Activated CD8-positive, alpha-beta memory T cell treated with anti-CD3 and anti-CD28 coated beads, Interleukin-2, amount 10 ng/mL, durations not matched to agents 7 days and 5 days (primary cell): ENCODE measurements at regions of chr3 and their contacts with region 1.

Region 1: GRCh38 chr3:183188895-183189462 is 26.4 kb upstream of the LAMP3 start:
- DNase-seq: peak; percentile 53
- ATAC-seq: peak; percentile 36
- H3K4me3 Mint-ChIP-seq: no peak overlapping the region
- H3K27ac Mint-ChIP-seq: no peak overlapping the region
- H3K4me1 Mint-ChIP-seq: peaks cover 13% of the 10 kb centered on the region
- H3K27me3 Mint-ChIP-seq: no peaks in the 10 kb centered on the region

Region 2: GRCh38 chr3:183122257-183122932 is 66.6 kb before region 1 on chr3:
- CTCF ChIA-PET with region 1: interaction called, 18 read pairs
- DNase-seq: no peak
- ATAC-seq: peak; percentile 27
- H3K4me3 Mint-ChIP-seq: no peak overlapping the region
- H3K27ac Mint-ChIP-seq: no peak overlapping the region
- H3K4me1 Mint-ChIP-seq: no peaks in the 10 kb centered on the region
- H3K27me3 Mint-ChIP-seq: peaks cover 5% of the 10 kb centered on the region

Region 3: GRCh38 chr3:183468424-183468823 is 279.4 kb after region 1 on chr3:
- CTCF ChIA-PET with region 1: no interaction called
- DNase-seq: no peak
- ATAC-seq: no peak
- H3K4me3 Mint-ChIP-seq: no peak overlapping the region
- H3K27ac Mint-ChIP-seq: peak overlapping the region; percentile 73
- H3K4me1 Mint-ChIP-seq: peaks cover 18% of the 10 kb centered on the region
- H3K27me3 Mint-ChIP-seq: peaks cover 5% of the 10 kb centered on the region

Region 4: GRCh38 chr3:183555541-183556081 is 366.6 kb after region 1 on chr3 and contains the start of gene KLHL6:
- CTCF ChIA-PET with region 1: no interaction called
- DNase-seq: peak; percentile 88
- ATAC-seq: peak; percentile 89
- H3K4me3 Mint-ChIP-seq: peak within 1 kb of the TSS; percentile 90
- H3K27ac Mint-ChIP-seq: peak within 1 kb of the TSS; percentile 98
- H3K4me1 Mint-ChIP-seq: peaks cover 57% of the 10 kb centered on the region
- H3K27me3 Mint-ChIP-seq: no peaks in the 10 kb centered on the region
- total RNA-seq, gene KLHL6: 30.9 to 31.5 TPM